A673 (cell line): ENCODE measurements at regions of chr15 and their contacts with region 1.

Region 1: DNA sequence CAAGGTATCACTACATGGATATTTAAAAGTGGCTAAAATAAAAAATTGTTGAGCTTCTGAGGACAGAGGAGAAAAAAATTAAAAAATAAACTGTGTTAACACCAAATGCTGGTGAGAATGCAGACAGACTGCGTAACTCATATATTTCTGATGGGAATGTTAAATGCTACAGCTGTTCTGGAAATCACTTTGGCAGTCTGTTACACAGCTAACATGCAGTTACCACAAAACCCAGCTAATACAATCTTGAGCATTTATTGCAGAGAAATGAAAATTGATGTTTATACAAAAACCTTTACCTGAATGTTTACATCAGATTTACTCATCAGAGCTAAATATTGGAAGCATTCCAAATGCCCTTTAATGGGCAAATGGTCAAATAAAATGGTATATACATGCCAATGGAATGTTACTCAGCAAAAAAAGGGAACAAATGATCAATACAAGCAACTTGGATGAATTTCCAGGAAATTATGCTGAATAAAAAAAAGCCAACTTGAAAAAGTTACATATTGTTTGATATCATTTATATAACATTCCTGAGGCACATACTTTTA is 24.6 kb downstream of the MNS1 start:
- DNase-seq: no peak
- H3K4me3 ChIP-seq: no peak overlapping the region
- H3K27ac ChIP-seq: no peak overlapping the region
- H3K4me1 ChIP-seq: no peaks in the 10 kb centered on the region
- H3K27me3 ChIP-seq: no peaks in the 10 kb centered on the region
- CTCF ChIP-seq: no peak

Region 2: GRCh38 chr15:56484287-56484686 is 44.0 kb after region 1 on chr15:
- CTCF ChIA-PET with region 1: no interaction called
- POLR2A ChIA-PET with region 1: interaction called, 13 read pairs
- intact Hi-C with region 1: no loop called
- DNase-seq: no peak
- H3K4me3 ChIP-seq: no peak overlapping the region
- H3K27ac ChIP-seq: no peak overlapping the region
- H3K4me1 ChIP-seq: no peaks in the 10 kb centered on the region
- H3K27me3 ChIP-seq: no peaks in the 10 kb centered on the region
- CTCF ChIP-seq: no peak